SK-N-SH (cell line): ENCODE measurements at regions of chr1 and their contacts with region 1.

Region 1: DNA sequence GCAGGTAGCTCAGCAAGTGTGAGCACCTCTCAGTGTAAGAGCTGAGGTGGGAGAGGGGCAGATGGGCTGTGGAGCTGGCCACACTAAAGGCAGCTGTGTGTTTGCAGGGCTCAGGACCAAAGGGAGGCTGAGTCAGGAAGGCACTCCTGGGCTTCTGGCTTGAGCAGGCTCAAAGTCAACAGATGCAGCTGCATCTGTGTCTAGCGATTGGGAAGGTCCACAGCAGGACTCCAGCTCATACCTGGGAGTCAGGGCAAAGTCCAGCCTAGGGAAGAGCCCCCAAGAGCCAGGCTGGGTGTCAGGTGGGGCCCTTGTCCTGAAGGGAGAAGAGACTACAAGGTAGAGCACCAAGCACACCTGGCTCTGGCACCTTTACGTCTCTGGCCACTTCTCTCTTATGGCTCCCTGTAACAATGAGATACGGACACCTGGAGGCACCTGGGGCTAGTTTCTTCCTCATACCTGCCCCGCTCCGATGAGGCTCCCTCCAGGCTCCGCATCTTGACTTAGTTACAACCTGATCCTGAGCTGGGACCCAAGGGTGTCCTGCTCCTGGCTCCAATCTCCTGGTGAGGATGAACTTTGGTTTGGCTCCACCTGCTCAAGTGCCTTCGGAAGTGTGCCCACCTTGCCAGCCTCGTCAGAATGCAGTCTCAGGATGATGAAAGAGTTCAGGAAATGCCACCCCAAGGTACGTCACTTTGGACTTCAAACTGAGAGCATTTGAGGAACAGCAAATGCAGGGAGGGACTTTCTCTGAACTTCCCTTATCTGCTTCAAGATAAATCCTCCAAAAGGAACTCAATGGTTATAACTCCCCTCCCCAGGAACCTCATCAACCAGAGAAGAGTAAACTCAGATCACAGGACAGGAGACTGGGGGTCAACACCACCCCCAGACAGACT is 21.5 kb upstream of the SLC2A1 start:
- DNase-seq: no peak
- H3K4me3 ChIP-seq: no peak overlapping the region
- H3K27ac ChIP-seq: peak overlapping the region in 1 of 2 experiments; percentile 98; a peak in 2 of 4 replicates
- H3K4me1 ChIP-seq: peaks cover 3 to 49% of the 10 kb centered on the region in 2 experiments; a peak in 3 of 4 replicates
- H3K27me3 ChIP-seq: no peaks in the 10 kb centered on the region
- CTCF ChIP-seq: no peak
- EP300 ChIP-seq: no peak
- RAD21 ChIP-seq: no peak

Region 2: GRCh38 chr1:42766741-42767509 is 213.2 kb before region 1 on chr1 and contains the starts of genes C1orf50 and P3H1:
- CTCF ChIA-PET with region 1: no interaction called
- POLR2A ChIA-PET with region 1: no interaction called
- DNase-seq: peak; percentile 97
- H3K4me3 ChIP-seq: peak within 1 kb of the TSS; percentile 77 to 91
- H3K27ac ChIP-seq: peak within 1 kb of the TSS; percentile 75 to 84
- H3K4me1 ChIP-seq: peaks cover 4 to 12% of the 10 kb centered on the region in 2 experiments; a peak in 2 of 4 replicates
- H3K27me3 ChIP-seq: no peaks in the 10 kb centered on the region
- CTCF ChIP-seq: no peak
- EP300 ChIP-seq: no peak
- RAD21 ChIP-seq: no peak
- polyA plus RNA-seq, gene C1orf50: 2.6 and 3.6 TPM in 2 replicates
- polyA plus RNA-seq, gene P3H1: 64.3 and 66.8 TPM in 2 replicates

Region 3: DNA sequence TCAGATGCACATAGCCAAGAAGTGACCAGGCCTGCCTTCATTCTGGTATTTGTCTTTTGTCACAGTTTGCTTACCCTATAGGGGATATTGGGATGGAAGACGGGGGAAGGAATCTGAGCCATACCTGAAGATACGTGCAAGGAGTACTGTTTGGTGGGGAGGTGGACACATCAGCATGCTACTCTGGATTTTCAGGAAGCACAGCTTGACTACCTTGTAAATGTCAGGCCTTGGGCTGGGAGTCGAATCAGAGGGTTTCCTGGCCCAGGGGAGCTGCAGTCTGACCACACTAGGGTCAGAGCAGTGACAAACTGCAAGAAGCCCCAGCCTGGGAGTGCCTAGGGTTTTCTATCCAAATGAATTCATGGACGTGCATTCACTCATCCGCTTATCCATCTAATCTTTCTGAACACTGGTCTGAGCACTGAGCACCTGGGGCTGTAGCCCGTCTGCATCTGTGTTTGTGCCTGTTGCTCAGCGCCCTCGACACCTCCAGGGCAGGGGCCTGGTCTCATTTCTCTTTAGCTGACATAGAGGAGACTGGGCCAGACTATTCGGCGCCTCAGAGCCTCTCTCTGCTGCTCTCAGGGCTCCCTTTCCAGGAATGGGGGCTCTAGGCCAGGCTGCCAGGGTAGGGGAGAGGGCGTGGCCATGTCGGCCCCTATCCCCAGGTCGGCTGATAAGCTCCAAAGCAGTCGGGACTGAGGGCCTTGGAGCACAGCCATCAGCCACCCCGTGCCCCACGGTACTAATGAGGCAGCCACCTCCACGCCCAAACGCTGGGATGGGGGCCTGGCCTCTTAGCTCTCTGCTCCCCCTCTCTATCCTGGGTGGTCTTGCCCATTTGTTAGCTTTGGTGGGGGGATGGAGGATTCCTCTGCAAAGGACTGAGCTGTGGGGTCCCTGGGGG is 25.6 kb after region 1 on chr1:
- CTCF ChIA-PET with region 1: interaction called, 4 read pairs
- POLR2A ChIA-PET with region 1: interaction called, 13 read pairs
- DNase-seq: peak; percentile 90
- H3K4me3 ChIP-seq: no peak overlapping the region
- H3K27ac ChIP-seq: peak overlapping the region in 1 of 2 experiments; percentile 96; a peak in 2 of 4 replicates
- H3K4me1 ChIP-seq: peaks cover 0 to 22% of the 10 kb centered on the region in 2 experiments; a peak in 2 of 4 replicates
- H3K27me3 ChIP-seq: no peaks in the 10 kb centered on the region
- CTCF ChIP-seq: no peak
- EP300 ChIP-seq: peak in 1 of 2 experiments; percentile 94; a peak in 2 of 4 replicates
- RAD21 ChIP-seq: peak; percentile 36; the same call in 1 of the 2 replicates